ENCODE measurements at regions of chr16 and their contacts with region 1.

Region 1: GRCh38 chr16:69741919-69742904 is 12.5 kb downstream of the NOB1 start:
- DNase-seq: no peak
- ATAC-seq: no peak
- H3K4me3 Mint-ChIP-seq: no peak overlapping the region
- H3K27ac Mint-ChIP-seq: no peak overlapping the region
- H3K4me1 Mint-ChIP-seq: no peaks in the 10 kb centered on the region
- H3K27me3 Mint-ChIP-seq: no peaks in the 10 kb centered on the region
- CTCF ChIP-seq: no peak

Region 2: GRCh38 chr16:69732101-69732500 is 10.1 kb before region 1 on chr16:
- CTCF ChIA-PET with region 1: interaction called, 4 read pairs
- POLR2A ChIA-PET with region 1: interaction called, 10 read pairs
- intact Hi-C with region 1: no loop called
- DNase-seq: no peak
- ATAC-seq: no peak
- H3K4me3 Mint-ChIP-seq: no peak overlapping the region
- H3K27ac Mint-ChIP-seq: no peak overlapping the region
- H3K4me1 Mint-ChIP-seq: peaks cover 3% of the 10 kb centered on the region
- H3K27me3 Mint-ChIP-seq: no peaks in the 10 kb centered on the region
- CTCF ChIP-seq: no peak